ENCODE measurements at regions of chr19 and their contacts with region 1.

Region 1: GRCh38 chr19:47336853-47337279 is 4.9 kb downstream of the C5AR2 start:
- DNase-seq: peak; percentile 38 to 63 (median 44)
- ATAC-seq: peak; percentile 45
- H3K4me3 ChIP-seq: no peak overlapping the region
- H3K27ac ChIP-seq: peak overlapping the region; percentile 86
- H3K4me1 ChIP-seq: peaks cover 29 to 50% of the 10 kb centered on the region in 2 experiments
- H3K27me3 ChIP-seq: no peaks in the 10 kb centered on the region
- CTCF ChIP-seq: no peak
- EP300 ChIP-seq: no peak
- POLR2A ChIP-seq: no peak
- RAD21 ChIP-seq: no peak

Region 2: DNA sequence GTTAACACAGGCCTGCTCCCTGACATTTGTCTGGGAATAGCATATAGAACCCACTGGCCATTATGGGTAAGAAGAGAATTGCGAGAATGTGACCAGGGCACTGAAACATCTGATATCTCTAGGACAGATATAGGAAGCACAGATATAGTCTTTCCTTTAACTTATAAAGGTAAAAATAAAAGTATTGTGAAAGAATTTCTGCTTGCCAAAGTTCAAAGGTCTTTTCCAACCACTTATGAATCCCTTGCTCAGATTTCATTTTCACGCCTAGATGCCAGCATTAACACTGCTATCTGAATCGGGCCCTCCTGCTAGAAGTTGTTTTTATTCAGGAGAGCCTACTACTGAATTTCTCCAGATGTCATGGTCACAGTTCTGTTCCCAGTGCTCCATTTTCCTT is 133.6 kb before region 1 on chr19:
- CTCF ChIA-PET with region 1: no interaction called
- POLR2A ChIA-PET with region 1: no interaction called
- in situ Hi-C with region 1: no loop called
- intact Hi-C with region 1: no loop called
- DNase-seq: no peak
- ATAC-seq: no peak
- H3K4me3 ChIP-seq: no peak overlapping the region
- H3K27ac ChIP-seq: no peak overlapping the region
- H3K4me1 ChIP-seq: no peaks in the 10 kb centered on the region
- H3K27me3 ChIP-seq: no peaks in the 10 kb centered on the region
- CTCF ChIP-seq: no peak
- EP300 ChIP-seq: no peak
- POLR2A ChIP-seq: no peak
- RAD21 ChIP-seq: no peak

Region 3: DNA sequence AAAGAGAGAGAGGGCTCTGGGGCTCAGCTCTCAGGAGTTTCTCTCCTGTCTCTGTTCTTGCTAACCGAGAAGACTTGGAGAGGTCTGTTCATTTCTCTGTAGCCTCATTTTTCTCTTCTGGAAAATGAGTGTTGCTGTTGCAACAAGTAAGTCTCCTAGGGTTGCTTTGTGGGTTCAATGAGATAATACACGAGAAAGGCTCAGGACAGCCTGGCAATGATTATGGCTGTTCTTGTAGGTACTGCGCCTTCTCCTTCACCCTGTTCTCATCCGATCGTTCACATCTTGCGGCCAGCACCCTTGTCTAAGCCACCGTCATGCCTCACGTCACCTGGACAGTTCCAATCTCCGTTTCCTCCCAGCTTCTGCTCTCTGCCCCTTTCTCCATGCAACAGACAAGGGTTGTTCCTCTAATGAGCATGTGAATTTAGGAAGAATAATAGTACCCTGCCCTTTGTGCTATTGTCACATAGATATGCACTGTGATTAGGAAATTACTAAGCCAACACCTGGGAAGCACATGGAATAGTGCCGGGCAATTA is 23.0 kb before region 1 on chr19:
- CTCF ChIA-PET with region 1: no interaction called
- POLR2A ChIA-PET with region 1: interaction called, 8 read pairs
- in situ Hi-C with region 1: no loop called
- intact Hi-C with region 1: loop called (anchors 2 kb)
- DNase-seq: no peak
- ATAC-seq: no peak
- H3K4me3 ChIP-seq: no peak overlapping the region
- H3K27ac ChIP-seq: peak overlapping the region; percentile 40; the same call in 2 of the 3 replicates
- H3K4me1 ChIP-seq: peaks cover 14 to 30% of the 10 kb centered on the region in 2 experiments; a peak in 4 of 5 replicates
- H3K27me3 ChIP-seq: no peaks in the 10 kb centered on the region
- CTCF ChIP-seq: no peak
- EP300 ChIP-seq: no peak
- POLR2A ChIP-seq: no peak
- RAD21 ChIP-seq: no peak

Region 4: DNA sequence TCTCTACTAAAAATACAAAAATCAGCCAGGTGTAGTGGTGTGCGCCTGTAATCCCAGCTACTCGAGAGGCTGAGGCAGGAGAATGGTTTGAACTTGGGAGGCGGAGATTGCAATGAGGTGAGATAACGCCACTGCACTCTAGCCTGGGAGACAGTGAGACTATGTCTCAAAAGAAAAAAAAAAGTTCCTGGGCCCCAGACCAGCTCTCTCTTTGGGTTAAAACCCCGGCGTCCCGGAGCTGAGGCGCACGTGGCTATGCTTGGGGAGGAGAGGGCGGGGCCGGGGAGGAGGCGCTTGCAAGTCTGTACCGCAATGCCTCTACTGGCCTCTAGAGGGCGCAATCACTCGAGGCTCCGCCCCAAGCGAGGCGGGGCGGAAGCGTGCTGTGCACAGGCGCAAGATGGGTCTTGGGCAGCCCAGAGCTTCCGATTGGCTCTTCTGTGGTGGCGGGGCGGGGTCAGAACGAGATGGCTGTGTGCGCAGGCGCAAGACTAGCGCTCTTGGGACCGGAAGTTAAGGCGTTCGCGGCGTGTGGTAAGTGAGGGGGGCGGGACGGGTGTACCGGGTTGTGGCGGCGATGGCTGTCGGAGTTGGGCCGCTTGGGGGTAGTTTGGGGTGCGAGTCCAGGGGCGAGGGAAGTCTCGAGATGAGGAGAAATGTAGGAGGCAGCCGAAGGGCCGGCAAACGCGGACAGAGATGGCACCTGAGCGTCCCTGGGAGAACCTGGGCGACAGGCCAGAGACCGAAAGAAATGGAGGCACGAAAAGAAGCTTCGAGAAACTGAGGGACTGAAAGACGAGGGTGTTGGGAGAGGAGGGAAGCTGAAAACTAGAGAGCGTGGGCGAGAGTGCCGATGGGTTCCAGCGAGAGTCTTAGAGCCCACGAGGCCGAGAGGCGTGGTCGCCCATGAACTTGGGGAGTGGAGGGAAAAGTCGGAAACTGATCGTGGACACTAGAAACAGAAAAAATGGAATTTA is 12.2 kb after region 1 on chr19 and contains the start of gene DHX34:
- CTCF ChIA-PET with region 1: no interaction called
- POLR2A ChIA-PET with region 1: interaction called, 16 read pairs
- in situ Hi-C with region 1: no loop called
- intact Hi-C with region 1: loop called (anchors 2 kb)
- DNase-seq: peak; percentile 99 to 100 (median 100)
- ATAC-seq: peak; percentile 98
- H3K4me3 ChIP-seq: peak within 1 kb of the TSS; percentile 77
- H3K27ac ChIP-seq: peak within 1 kb of the TSS; percentile 82
- H3K4me1 ChIP-seq: peaks cover 26 to 32% of the 10 kb centered on the region in 2 experiments
- H3K27me3 ChIP-seq: no peaks in the 10 kb centered on the region
- CTCF ChIP-seq: peak; percentile 93 to 99 (median 98)
- EP300 ChIP-seq: peak; percentile 20; the same call in 1 of the 2 replicates
- POLR2A ChIP-seq: peak; percentile 92
- RAD21 ChIP-seq: peak; percentile 31 to 40; a peak in 2 of 4 replicates
- polyA plus RNA-seq, gene DHX34: 0.36 to 0.41 TPM